PC-3 (cell line): ENCODE measurements at regions of chr2 and their contacts with region 1.

Region 1: GRCh38 chr2:27703638-27704341 is 40.1 kb downstream of the SLC4A1AP start:
- DNase-seq: peak; percentile 94
- ATAC-seq: peak; percentile 62
- H3K4me3 ChIP-seq: no peak overlapping the region
- H3K27ac ChIP-seq: no peak overlapping the region
- H3K4me1 ChIP-seq: peaks cover 30% of the 10 kb centered on the region
- H3K27me3 ChIP-seq: no peaks in the 10 kb centered on the region
- CTCF ChIP-seq: peak; percentile 96

Region 2: GRCh38 chr2:27771548-27772335 is 68.0 kb after region 1 on chr2 and contains the start of gene MRPL33:
- CTCF ChIA-PET with region 1: no interaction called
- POLR2A ChIA-PET with region 1: no interaction called
- intact Hi-C with region 1: loop called (anchors 10 kb)
- DNase-seq: peak; percentile 93
- ATAC-seq: peak; percentile 92
- H3K4me3 ChIP-seq: peak within 1 kb of the TSS; percentile 96
- H3K27ac ChIP-seq: peak within 1 kb of the TSS; percentile 62
- H3K4me1 ChIP-seq: peaks cover 40% of the 10 kb centered on the region
- H3K27me3 ChIP-seq: no peaks in the 10 kb centered on the region
- CTCF ChIP-seq: no peak
- total RNA-seq, gene MRPL33: 95.7 and 110 TPM in 2 replicates

Region 3: DNA sequence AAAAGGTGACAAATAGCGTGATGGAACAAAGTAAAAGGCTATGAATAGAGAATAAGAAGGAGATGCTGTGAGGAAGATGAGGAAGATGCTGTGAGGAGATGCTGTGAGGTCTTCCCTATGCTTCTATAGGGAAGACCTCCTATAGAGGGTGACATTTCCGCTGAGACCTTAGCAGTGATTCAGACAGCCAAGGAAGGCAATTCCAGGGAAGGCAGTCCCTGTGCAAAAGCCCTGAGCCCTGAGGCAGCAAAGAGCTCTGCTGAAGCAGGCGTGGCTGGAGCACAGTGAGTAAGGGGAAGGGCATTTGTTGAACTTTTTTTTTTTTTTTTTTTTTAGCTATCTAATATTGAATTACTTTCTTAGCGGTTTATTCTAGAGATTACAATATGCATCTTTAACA is 546.2 kb after region 1 on chr2:
- CTCF ChIA-PET with region 1: no interaction called
- POLR2A ChIA-PET with region 1: interaction called, 11 read pairs
- intact Hi-C with region 1: no loop called
- DNase-seq: peak; percentile 95
- ATAC-seq: peak; percentile 100
- H3K4me3 ChIP-seq: no peak overlapping the region
- H3K27ac ChIP-seq: no peak overlapping the region
- H3K4me1 ChIP-seq: peaks cover 16% of the 10 kb centered on the region
- H3K27me3 ChIP-seq: no peaks in the 10 kb centered on the region
- CTCF ChIP-seq: peak; percentile 37; the same call in 1 of the 2 replicates

Region 4: DNA sequence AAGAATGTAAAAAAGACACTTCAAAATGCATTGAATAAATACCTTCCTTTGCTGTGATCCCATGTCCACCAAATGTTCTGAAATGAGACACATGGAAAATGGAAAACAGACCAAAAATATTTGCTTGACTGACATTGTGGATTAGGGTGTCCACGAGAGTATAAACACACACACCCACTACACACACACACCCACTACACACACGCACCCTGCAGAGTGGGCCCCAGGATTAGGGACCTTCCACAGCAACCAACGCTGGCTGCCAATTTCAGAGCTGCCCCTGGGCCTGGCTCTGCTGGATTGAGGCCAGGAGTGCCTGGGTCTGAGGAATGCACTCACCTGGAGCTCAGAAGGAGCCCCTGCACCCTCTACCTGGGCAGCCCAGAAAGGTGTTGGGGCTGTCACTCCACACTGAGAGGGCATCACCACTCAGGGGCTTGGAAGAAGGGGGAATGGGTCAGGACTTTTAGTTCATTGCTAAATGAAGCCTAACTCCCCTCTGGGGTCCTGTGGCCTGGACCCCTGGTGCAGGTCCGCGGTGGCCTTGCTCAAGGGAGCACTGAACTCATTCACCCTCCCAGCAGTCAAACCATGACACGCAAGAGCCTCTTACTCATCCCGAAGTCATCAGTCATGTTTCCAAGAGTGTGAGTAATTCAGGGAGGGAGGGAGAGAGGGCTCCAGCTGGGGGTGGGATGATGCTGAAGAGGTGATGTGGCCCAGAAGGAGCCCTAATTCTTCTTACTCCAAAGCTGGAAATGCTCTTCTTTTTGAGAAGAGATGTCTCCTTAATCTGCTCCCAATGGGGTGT is 741.9 kb after region 1 on chr2:
- CTCF ChIA-PET with region 1: no interaction called
- POLR2A ChIA-PET with region 1: no interaction called
- intact Hi-C with region 1: loop called (anchors 5 kb)
- DNase-seq: peak; percentile 98
- ATAC-seq: peak; percentile 89
- H3K4me3 ChIP-seq: peak overlapping the region; percentile 34; the same call in 1 of the 2 replicates
- H3K27ac ChIP-seq: peak overlapping the region; percentile 80
- H3K4me1 ChIP-seq: peaks cover 68% of the 10 kb centered on the region
- H3K27me3 ChIP-seq: no peaks in the 10 kb centered on the region
- CTCF ChIP-seq: no peak